Mammary epithelial cell (primary cell): ENCODE measurements at regions of chr15 and their contacts with region 1.

Region 1: GRCh38 chr15:70596354-70597055 is 166.9 kb downstream of the UACA start:
- DNase-seq: peak; percentile 91
- H3K4me3 ChIP-seq: no peak overlapping the region
- H3K27ac ChIP-seq: no peak overlapping the region
- H3K4me1 ChIP-seq: peaks cover 16% of the 10 kb centered on the region
- H3K27me3 ChIP-seq: no peaks in the 10 kb centered on the region
- CTCF ChIP-seq: no peak

Region 2: GRCh38 chr15:70539912-70540530 is 56.5 kb before region 1 on chr15:
- CTCF ChIA-PET with region 1: no interaction called
- dilution Hi-C with region 1: loop called (anchors 5 kb)
- in situ Hi-C with region 1: no loop called
- intact Hi-C with region 1: no loop called
- DNase-seq: no peak
- H3K4me3 ChIP-seq: no peak overlapping the region
- H3K27ac ChIP-seq: no peak overlapping the region
- H3K4me1 ChIP-seq: no peaks in the 10 kb centered on the region
- H3K27me3 ChIP-seq: peaks cover 26% of the 10 kb centered on the region
- CTCF ChIP-seq: no peak